ENCODE measurements at regions of chr12 and their contacts with region 1.

Region 1: GRCh38 chr12:112900299-112901145 is 6.2 kb upstream of the OAS1 start:
- DNase-seq: no peak

Region 2: DNA sequence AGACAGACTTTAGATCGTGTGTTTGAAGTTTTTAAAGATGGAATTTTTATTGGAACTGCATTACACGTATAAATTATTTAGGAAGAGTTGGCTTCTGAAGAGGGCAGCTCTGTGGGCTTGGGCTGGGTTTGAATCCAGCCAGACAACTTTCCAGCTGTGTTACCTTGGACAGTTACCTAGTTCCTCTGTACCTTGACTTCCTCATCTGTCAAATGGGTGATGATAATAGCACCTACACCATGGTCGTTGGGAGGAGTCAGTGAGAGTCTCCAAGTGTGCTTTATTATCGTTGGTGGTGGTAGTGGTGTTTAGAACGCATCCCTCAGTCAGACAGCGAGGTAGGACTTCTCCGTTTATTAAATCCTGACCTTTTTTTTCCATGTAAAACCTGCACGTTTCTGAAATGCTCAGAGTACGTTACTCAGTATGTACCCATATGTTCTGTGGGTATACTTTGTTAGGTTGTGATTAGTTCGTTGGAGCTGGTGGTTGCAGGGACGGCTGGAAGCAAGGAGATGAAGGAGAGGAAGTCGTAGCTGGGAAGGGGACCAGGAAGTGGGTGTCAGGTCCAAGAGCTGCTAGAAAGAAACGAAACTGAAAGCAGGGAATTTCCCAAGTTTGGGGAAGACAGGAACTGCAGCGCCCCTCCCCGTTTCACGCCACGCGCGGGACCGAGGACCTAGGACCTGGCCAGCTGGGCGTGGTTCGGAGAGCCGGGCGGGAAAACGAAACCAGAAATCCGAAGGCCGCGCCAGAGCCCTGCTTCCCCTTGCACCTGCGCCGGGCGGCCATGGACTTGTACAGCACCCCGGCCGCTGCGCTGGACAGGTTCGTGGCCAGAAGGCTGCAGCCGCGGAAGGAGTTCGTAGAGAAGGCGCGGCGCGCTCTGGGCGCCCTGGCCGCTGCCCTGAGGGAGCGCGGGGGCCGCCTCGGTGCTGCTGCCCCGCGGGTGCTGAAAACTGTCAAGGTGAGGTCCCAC is 37.5 kb after region 1 on chr12 and contains the start of gene OAS3:
- intact Hi-C with region 1: loop called (anchors 5 kb)
- DNase-seq: peak; percentile 92
- total RNA-seq, gene OAS3: 6.4 TPM

Region 3: GRCh38 chr12:113030875-113031525 is 130.5 kb after region 1 on chr12:
- intact Hi-C with region 1: loop called (anchors 5 kb)
- DNase-seq: no peak

Measured in cardiac septum (tissue), 1 donor.